ENCODE measurements at regions of chr11 and their contacts with region 1.

Region 1: GRCh38 chr11:84564180-84564866 is 1062.8 kb downstream of the DLG2 start:
- DNase-seq: peak; percentile 60
- H3K4me3 ChIP-seq: no peak overlapping the region
- H3K27ac ChIP-seq: no peak overlapping the region
- H3K4me1 ChIP-seq: no peaks in the 10 kb centered on the region
- H3K27me3 ChIP-seq: no peaks in the 10 kb centered on the region
- CTCF ChIP-seq: peak; percentile 91

Region 2: GRCh38 chr11:83682611-83682973 is 881.7 kb before region 1 on chr11:
- CTCF ChIA-PET with region 1: no interaction called
- POLR2A ChIA-PET with region 1: no interaction called
- intact Hi-C with region 1: no loop called
- DNase-seq: no peak
- H3K4me3 ChIP-seq: peak overlapping the region; percentile 43
- H3K27ac ChIP-seq: peak overlapping the region; percentile 66
- H3K4me1 ChIP-seq: peaks cover 64% of the 10 kb centered on the region
- H3K27me3 ChIP-seq: no peaks in the 10 kb centered on the region
- CTCF ChIP-seq: no peak

Region 3: GRCh38 chr11:83827940-83828554 is 736.3 kb before region 1 on chr11:
- CTCF ChIA-PET with region 1: interaction called, 3 read pairs
- POLR2A ChIA-PET with region 1: no interaction called
- intact Hi-C with region 1: loop called (anchors 2 kb)
- DNase-seq: peak; percentile 88
- H3K4me3 ChIP-seq: no peak overlapping the region
- H3K27ac ChIP-seq: no peak overlapping the region
- H3K4me1 ChIP-seq: peaks cover 26% of the 10 kb centered on the region
- H3K27me3 ChIP-seq: no peaks in the 10 kb centered on the region
- CTCF ChIP-seq: peak; percentile 83

Measured in A673 (cell line).